ENCODE measurements at regions of chrX and their contacts with region 1.

Region 1: GRCh38 chrX:78555401-78555980 is 103.6 kb downstream of the RTL3 start:
- DNase-seq: no peak
- ATAC-seq: no peak
- H3K4me3 ChIP-seq: no peak overlapping the region
- H3K27ac ChIP-seq: no peak overlapping the region
- H3K4me1 ChIP-seq: no peaks in the 10 kb centered on the region
- H3K27me3 ChIP-seq: no peaks in the 10 kb centered on the region
- CTCF ChIP-seq: peak in 11 of 12 donors; percentile 28 to 54 (median 39)
- POLR2A ChIP-seq: no peak

Region 2: GRCh38 chrX:78493180-78493579 is 62.3 kb before region 1 on chrX:
- intact Hi-C with region 1: no loop called
- DNase-seq: no peak
- ATAC-seq: no peak
- H3K4me3 ChIP-seq: no peak overlapping the region
- H3K27ac ChIP-seq: no peak overlapping the region
- H3K4me1 ChIP-seq: no peaks in the 10 kb centered on the region
- H3K27me3 ChIP-seq: no peaks in the 10 kb centered on the region
- CTCF ChIP-seq: no peak
- POLR2A ChIP-seq: no peak

Region 3: DNA sequence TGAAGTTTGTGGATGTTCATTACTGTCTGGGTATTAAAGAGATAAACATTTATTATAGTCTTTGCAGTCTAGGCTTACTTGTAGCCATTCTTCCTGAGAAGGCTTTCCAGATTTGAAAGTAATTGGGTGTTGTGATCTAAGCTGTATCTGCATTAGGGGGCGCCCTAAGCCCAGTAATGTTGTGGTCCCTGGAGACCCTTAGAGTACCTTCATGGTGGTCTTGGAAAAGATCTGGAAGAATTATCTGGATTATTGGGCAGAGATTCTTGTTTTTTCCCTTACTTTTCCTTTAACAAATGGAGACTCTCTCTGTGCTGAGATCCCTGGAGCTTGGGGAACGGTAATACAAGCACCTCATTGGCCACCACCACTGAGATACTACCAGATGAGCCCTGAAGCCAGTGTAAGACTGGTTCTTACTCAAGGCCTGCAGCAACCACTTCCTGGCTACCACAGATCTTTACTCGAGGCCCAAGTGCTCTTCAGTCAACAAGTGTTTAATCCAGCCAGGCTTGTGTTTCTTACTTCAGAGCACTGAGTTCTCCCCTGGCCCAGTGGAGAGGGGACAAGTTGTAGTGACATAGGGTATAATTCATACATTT is 40.5 kb after region 1 on chrX:
- intact Hi-C with region 1: no loop called
- DNase-seq: no peak
- ATAC-seq: no peak
- H3K4me3 ChIP-seq: no peak overlapping the region
- H3K27ac ChIP-seq: no peak overlapping the region
- H3K4me1 ChIP-seq: no peaks in the 10 kb centered on the region
- H3K27me3 ChIP-seq: peaks cover 0 to 7% (median 0%) of the 10 kb centered on the region in 9 donors
- CTCF ChIP-seq: peak in 3 of 12 donors; percentile 20 to 34 (median 23)
- POLR2A ChIP-seq: no peak

Region 4: GRCh38 chrX:78886550-78886949 is 331.1 kb after region 1 on chrX:
- intact Hi-C with region 1: loop called in 1 of 10 experiments (anchors 5 kb)
- DNase-seq: no peak
- ATAC-seq: no peak
- H3K4me3 ChIP-seq: no peak overlapping the region
- H3K27ac ChIP-seq: no peak overlapping the region
- H3K4me1 ChIP-seq: no peaks in the 10 kb centered on the region
- H3K27me3 ChIP-seq: peaks cover 0 to 4% (median 0%) of the 10 kb centered on the region in 9 donors
- CTCF ChIP-seq: peak in 7 of 12 donors; percentile 6 to 38 (median 35)
- POLR2A ChIP-seq: no peak

Region 5: DNA sequence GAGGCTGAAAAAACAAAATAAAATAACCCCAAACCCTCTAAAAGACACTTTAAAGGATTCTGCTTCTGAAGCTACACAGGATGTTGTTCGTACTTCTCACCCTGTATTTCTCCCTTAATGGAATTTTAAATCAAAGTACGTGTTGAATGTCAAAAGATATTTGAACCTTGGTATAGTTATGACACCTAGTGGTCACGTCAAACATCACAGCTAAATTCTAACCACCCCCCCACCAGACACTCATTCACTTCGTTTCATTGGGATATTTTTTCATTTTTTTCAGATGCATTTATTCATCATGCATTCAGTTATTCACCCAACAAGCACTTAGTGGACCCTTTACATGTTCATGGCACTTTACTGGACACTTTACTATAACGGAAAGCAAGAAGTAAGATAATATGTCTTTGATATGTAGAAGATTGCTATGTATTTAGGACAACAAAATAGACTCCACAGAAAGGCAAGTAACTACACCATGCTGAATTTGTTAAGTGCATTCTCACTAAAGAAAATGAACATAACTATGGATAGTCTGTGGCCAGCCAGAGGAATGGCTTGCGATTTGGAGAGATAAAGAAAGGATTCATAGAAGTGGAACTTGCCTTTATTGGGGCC is 526.5 kb after region 1 on chrX:
- intact Hi-C with region 1: loop called in 9 of 10 experiments (anchors 5 to 10 kb)
- DNase-seq: peak in 1 of 5 donors; percentile 6
- ATAC-seq: peak in 3 of 4 donors; percentile 52 to 59 (median 59)
- H3K4me3 ChIP-seq: peak overlapping the region in 1 of 12 donors; percentile 30
- H3K27ac ChIP-seq: no peak overlapping the region
- H3K4me1 ChIP-seq: peaks cover 0 to 4% (median 0%) of the 10 kb centered on the region in 12 donors
- H3K27me3 ChIP-seq: peaks cover 0 to 12% (median 0%) of the 10 kb centered on the region in 9 donors
- CTCF ChIP-seq: peak; percentile 44 to 69 (median 60)
- POLR2A ChIP-seq: no peak

Region 6: GRCh38 chrX:79270401-79270800 is 714.9 kb after region 1 on chrX:
- intact Hi-C with region 1: loop called in 3 of 10 experiments (anchors 5 to 10 kb)
- DNase-seq: peak in 4 of 5 donors; percentile 34 to 54 (median 44)
- ATAC-seq: peak in 2 of 4 donors; percentile 54 to 83
- H3K4me3 ChIP-seq: no peak overlapping the region
- H3K27ac ChIP-seq: peak overlapping the region in 4 of 12 donors; percentile 39 to 58 (median 48)
- H3K4me1 ChIP-seq: peaks cover 0 to 13% (median 0%) of the 10 kb centered on the region in 12 donors
- H3K27me3 ChIP-seq: peaks cover 0 to 5% (median 0%) of the 10 kb centered on the region in 9 donors
- CTCF ChIP-seq: peak in 11 of 12 donors; percentile 28 to 62 (median 48)
- POLR2A ChIP-seq: no peak

Region 7: GRCh38 chrX:79412972-79413371 is 857.5 kb after region 1 on chrX:
- intact Hi-C with region 1: loop called in 6 of 10 experiments (anchors 5 to 10 kb)
- DNase-seq: no peak
- ATAC-seq: no peak
- H3K4me3 ChIP-seq: peak overlapping the region in 9 of 12 donors; percentile 17 to 54 (median 42)
- H3K27ac ChIP-seq: peak overlapping the region in 3 of 12 donors; percentile 24 to 67 (median 42)
- H3K4me1 ChIP-seq: no peaks in the 10 kb centered on the region
- H3K27me3 ChIP-seq: no peaks in the 10 kb centered on the region
- CTCF ChIP-seq: peak; percentile 19 to 57 (median 38)
- POLR2A ChIP-seq: no peak

Measured in heart left ventricle (tissue), 16 donors.